PC-3 (cell line): ENCODE measurements at regions of chr14 and their contacts with region 1.

Region 1: DNA sequence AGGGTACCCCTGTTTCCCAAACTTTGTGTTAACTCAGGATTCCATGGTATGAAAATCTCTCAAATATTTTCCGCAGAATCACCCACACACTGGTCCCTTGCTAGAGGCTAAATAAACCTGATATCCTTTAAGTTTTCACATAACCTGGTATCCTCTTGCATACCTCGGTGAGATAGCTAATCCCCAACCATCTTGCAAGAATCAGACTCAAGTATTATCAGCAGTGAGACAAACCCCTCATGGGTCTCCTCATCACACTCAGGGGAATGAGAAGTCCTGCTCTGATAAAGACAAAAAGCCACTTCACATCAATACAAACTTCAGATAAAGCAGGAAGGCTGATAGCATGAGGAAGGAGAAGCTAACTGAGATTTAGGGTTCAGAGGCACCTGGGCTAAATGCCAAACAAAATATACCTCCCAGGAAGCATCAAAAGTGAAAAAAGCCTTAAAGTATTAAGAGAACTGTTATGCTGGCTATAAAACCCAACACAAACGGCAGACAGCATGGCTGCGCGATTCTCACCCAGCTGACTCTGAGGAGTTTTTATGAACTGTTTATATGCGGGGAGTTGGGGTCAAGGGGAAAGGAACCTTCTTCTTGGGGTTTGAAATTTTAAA is 96.5 kb downstream of the FOXN3 start:
- DNase-seq: no peak
- ATAC-seq: no peak
- H3K4me3 ChIP-seq: no peak overlapping the region
- H3K27ac ChIP-seq: peak overlapping the region; percentile 55
- H3K4me1 ChIP-seq: peaks cover 15% of the 10 kb centered on the region; the same call in 1 of the 2 replicates
- H3K27me3 ChIP-seq: no peaks in the 10 kb centered on the region
- CTCF ChIP-seq: no peak

Region 2: GRCh38 chr14:89339579-89339978 is 19.1 kb after region 1 on chr14:
- CTCF ChIA-PET with region 1: no interaction called
- POLR2A ChIA-PET with region 1: interaction called, 12 read pairs
- intact Hi-C with region 1: no loop called
- DNase-seq: no peak
- ATAC-seq: no peak
- H3K4me3 ChIP-seq: no peak overlapping the region
- H3K27ac ChIP-seq: no peak overlapping the region
- H3K4me1 ChIP-seq: no peaks in the 10 kb centered on the region
- H3K27me3 ChIP-seq: no peaks in the 10 kb centered on the region
- CTCF ChIP-seq: no peak